ENCODE measurements at regions of chr7 and their contacts with region 1.

Region 1: DNA sequence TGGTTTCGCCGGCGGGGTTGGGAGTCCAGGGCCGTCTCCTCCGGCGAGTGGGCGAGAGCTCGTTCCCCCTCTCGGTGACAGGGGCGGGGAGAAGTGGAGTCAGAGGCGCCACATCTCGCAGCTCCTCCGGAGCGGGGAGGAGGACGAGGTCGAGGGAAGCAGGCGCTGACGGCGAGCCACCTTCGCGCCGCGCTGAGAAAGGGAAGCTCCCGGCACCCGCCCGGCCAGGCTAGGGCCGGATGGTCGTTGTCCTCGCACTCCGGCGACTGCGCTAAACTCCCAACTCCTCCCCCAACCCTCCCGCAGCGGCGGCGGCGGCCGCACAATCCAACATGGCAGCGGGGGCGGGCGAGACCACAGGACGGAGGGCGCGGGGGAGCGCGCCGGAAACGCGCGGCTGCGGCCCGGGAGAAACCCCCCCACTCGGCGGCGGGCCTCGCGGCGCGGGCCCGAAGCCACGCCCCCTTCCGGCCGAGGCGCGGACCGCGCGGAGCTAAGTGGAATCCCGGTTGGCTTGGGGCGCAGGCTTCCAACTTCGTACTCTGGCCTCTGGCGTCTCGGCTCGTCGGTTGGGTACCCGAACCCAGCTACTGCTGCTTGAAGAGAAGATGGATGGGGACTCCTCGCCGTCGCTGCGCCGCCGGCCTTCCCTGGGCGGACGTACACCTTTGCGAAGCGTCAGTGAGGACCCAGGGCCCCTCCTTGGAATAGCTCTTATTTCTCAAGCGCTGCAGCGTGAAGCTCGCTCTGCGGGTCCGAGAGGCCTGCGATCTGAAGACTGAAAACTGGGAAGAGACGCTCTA is at the start of gene WASL:
- H3K4me3 Mint-ChIP-seq: peak within 1 kb of the TSS; percentile 96
- H3K27ac Mint-ChIP-seq: peak within 1 kb of the TSS; percentile 98
- H3K4me1 Mint-ChIP-seq: peaks cover 42% of the 10 kb centered on the region
- H3K27me3 Mint-ChIP-seq: no peaks in the 10 kb centered on the region

Region 2: GRCh38 chr7:123534383-123535260 is 214.3 kb before region 1 on chr7 and contains the start of gene IQUB:
- intact Hi-C with region 1: loop called (anchors 2 kb)
- H3K4me3 Mint-ChIP-seq: peak within 1 kb of the TSS; percentile 95
- H3K27ac Mint-ChIP-seq: peak within 1 kb of the TSS; percentile 99
- H3K4me1 Mint-ChIP-seq: peaks cover 17% of the 10 kb centered on the region
- H3K27me3 Mint-ChIP-seq: peaks cover 36% of the 10 kb centered on the region

Region 3: DNA sequence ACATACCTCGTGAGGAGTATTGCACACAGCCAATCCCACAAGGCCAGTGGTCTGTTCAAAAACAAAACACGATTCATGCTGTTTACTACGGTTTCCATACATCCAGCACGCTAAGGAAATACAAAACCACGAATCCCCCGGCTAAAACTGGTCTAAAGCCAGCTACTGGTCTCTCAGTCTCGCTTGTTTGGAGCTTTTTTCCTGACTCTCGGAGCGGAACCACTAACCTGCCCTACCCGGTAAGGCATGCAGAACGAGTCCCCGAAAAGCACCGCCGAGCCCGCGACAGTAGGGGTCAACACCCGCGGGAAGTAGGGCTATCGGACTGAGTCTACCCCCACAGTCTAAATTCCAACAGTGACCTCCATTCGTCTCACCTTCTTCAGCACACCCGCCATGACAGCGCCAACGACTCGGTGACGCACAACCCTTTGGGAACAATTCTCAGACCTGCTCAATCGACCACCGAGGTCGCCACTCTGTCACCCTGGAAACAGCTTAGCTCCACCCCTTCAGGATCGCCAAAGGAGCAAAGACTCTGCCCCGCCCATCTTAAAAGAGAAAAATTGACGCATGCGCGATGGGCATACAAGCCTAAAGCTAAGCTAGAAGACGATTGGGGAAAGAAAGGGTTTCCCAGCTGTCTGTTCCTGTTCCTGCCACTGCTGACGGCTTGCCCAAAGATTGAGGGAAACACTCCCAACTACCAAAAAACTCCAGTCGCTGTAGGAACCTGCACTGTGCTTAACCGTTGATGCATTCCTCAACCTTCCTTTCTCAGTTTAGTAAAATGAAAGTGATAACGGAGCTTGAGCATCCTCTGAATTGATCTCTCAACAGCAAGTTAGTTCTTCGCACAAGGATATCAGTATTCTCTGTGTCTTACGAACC is 191.3 kb before region 1 on chr7 and contains the start of gene NDUFA5:
- intact Hi-C with region 1: loop called (anchors 2 kb)
- H3K4me3 Mint-ChIP-seq: no peak within 1 kb of the TSS
- H3K27ac Mint-ChIP-seq: no peak within 1 kb of the TSS
- H3K4me1 Mint-ChIP-seq: peaks cover 6% of the 10 kb centered on the region
- H3K27me3 Mint-ChIP-seq: peaks cover 16% of the 10 kb centered on the region

Region 4: GRCh38 chr7:123712619-123713018 is 36.3 kb before region 1 on chr7:
- intact Hi-C with region 1: loop called (anchors 5 kb)
- H3K4me3 Mint-ChIP-seq: no peak overlapping the region
- H3K27ac Mint-ChIP-seq: peak overlapping the region; percentile 57
- H3K4me1 Mint-ChIP-seq: peaks cover 34% of the 10 kb centered on the region
- H3K27me3 Mint-ChIP-seq: no peaks in the 10 kb centered on the region

Region 5: GRCh38 chr7:124929467-124930172 is 1180.7 kb after region 1 on chr7 and contains the start of gene POT1:
- intact Hi-C with region 1: loop called (anchors 5 kb)
- H3K4me3 Mint-ChIP-seq: peak within 1 kb of the TSS; percentile 89
- H3K27ac Mint-ChIP-seq: peak within 1 kb of the TSS; percentile 92
- H3K4me1 Mint-ChIP-seq: peaks cover 20% of the 10 kb centered on the region
- H3K27me3 Mint-ChIP-seq: peaks cover 15% of the 10 kb centered on the region